ENCODE measurements at regions of chr1 and their contacts with region 1.

Region 1: DNA sequence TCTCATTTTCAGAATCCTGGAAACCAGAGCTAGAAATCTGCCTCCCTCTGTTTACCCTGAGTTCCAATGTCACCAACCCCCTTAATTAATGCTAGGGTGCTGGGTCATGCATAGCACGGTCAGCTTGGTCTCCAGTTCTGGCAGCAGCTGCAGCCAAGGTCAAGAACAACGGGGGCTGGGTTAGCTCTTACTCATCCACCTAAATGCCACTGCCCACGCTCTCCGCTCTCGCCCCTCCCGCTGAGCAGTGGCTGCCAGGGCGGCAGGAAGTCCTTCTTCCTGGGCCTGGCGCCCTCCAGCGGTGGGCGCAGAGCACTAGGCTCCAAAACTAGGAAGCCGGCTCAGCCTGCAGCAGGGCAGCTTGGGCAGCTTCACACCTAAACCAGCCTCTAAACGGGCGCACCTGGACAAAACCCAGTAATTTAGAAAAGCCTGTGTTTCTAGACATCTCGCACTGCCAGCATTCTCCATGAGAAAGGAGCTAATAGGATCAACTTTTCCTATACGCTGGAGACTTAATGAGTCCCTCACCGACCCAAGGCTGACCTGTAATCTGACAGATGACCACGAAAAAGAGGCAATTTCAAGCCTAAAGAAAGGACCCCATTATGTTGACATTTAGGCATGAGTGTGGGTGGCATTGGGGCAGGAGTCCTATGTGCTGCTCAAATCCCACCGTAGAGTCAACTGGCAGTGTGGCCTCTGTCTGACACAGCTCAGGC is 78.3 kb upstream of the LRRN2 start:
- DNase-seq: peak; percentile 85
- ATAC-seq: peak; percentile 98
- H3K4me3 Mint-ChIP-seq: peak overlapping the region; percentile 54
- H3K27ac Mint-ChIP-seq: no peak overlapping the region
- H3K4me1 Mint-ChIP-seq: peaks cover 16% of the 10 kb centered on the region
- H3K27me3 Mint-ChIP-seq: peaks cover 47% of the 10 kb centered on the region
- CTCF ChIP-seq: peak; percentile 67

Region 2: GRCh38 chr1:204516180-204516879 is 247.5 kb before region 1 on chr1 and contains the start of gene MDM4:
- CTCF ChIA-PET with region 1: no interaction called
- POLR2A ChIA-PET with region 1: no interaction called
- DNase-seq: peak; percentile 91
- ATAC-seq: peak; percentile 98
- H3K4me3 Mint-ChIP-seq: no peak within 1 kb of the TSS
- H3K27ac Mint-ChIP-seq: no peak within 1 kb of the TSS
- H3K4me1 Mint-ChIP-seq: peaks cover 12% of the 10 kb centered on the region
- H3K27me3 Mint-ChIP-seq: peaks cover under 1% of the 10 kb centered on the region; the same call in 1 of the 2 replicates
- CTCF ChIP-seq: no peak
- total RNA-seq, gene MDM4: 73.5 to 76.2 TPM (median 74.1 TPM) in 3 replicates

Region 3: GRCh38 chr1:204565617-204566582 is 198.0 kb before region 1 on chr1:
- CTCF ChIA-PET with region 1: interaction called, 57 read pairs
- POLR2A ChIA-PET with region 1: no interaction called
- DNase-seq: peak; percentile 40
- ATAC-seq: peak; percentile 85
- H3K4me3 Mint-ChIP-seq: peak overlapping the region; percentile 53
- H3K27ac Mint-ChIP-seq: peak overlapping the region; percentile 71
- H3K4me1 Mint-ChIP-seq: peaks cover 54% of the 10 kb centered on the region
- H3K27me3 Mint-ChIP-seq: peaks cover 6% of the 10 kb centered on the region
- CTCF ChIP-seq: peak; percentile 68

Region 4: GRCh38 chr1:204607910-204608309 is 156.0 kb before region 1 on chr1:
- CTCF ChIA-PET with region 1: interaction called, 11 read pairs
- POLR2A ChIA-PET with region 1: no interaction called
- DNase-seq: no peak
- ATAC-seq: no peak
- H3K4me3 Mint-ChIP-seq: no peak overlapping the region
- H3K27ac Mint-ChIP-seq: no peak overlapping the region
- H3K4me1 Mint-ChIP-seq: peaks cover 6% of the 10 kb centered on the region; the same call in 1 of the 2 replicates
- H3K27me3 Mint-ChIP-seq: peaks cover 11% of the 10 kb centered on the region
- CTCF ChIP-seq: no peak

Region 5: GRCh38 chr1:204651843-204652421 is 111.9 kb before region 1 on chr1:
- CTCF ChIA-PET with region 1: interaction called, 20 read pairs
- POLR2A ChIA-PET with region 1: no interaction called
- DNase-seq: peak; percentile 50
- ATAC-seq: peak; percentile 72
- H3K4me3 Mint-ChIP-seq: peak overlapping the region; percentile 43
- H3K27ac Mint-ChIP-seq: no peak overlapping the region
- H3K4me1 Mint-ChIP-seq: peaks cover 43% of the 10 kb centered on the region
- H3K27me3 Mint-ChIP-seq: peaks cover 18% of the 10 kb centered on the region
- CTCF ChIP-seq: no peak

Region 6: GRCh38 chr1:204692325-204692840 is 71.5 kb before region 1 on chr1:
- CTCF ChIA-PET with region 1: interaction called, 17 read pairs
- POLR2A ChIA-PET with region 1: no interaction called
- DNase-seq: no peak
- ATAC-seq: peak; percentile 66
- H3K4me3 Mint-ChIP-seq: peak overlapping the region; percentile 28
- H3K27ac Mint-ChIP-seq: no peak overlapping the region
- H3K4me1 Mint-ChIP-seq: peaks cover 28% of the 10 kb centered on the region
- H3K27me3 Mint-ChIP-seq: peaks cover 56% of the 10 kb centered on the region
- CTCF ChIP-seq: no peak

Region 7: DNA sequence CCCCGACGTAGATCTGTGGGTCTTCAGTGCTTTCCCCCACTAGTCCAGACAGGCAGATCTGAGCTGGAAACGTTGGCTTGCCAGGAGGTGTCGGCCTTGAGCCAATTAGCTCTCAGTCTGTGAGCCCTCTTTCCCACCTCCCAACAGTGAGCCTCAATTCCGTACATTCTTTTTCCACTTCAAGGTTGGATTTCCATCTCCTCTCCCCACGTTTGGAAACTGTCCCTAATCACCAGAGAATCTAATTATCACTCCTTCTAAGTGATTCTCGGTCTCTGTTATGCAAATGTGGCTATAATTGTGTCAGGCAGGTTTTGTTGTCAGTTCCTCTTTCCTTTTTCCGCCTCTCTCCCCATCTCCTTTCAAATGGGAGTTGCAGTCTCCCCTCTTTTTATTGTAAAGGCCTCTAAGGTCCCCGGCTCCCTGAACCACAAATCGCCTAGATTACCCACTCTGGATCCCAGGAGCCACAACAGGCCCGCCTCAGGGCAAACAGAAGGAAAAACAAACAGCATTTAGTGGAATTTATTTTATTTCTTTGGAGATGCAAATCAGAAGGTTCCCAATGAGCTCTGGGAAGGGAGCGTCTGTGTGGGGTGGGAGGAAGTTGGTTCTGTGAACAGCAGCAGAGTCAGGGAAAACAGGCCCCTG is 48.9 kb before region 1 on chr1:
- CTCF ChIA-PET with region 1: interaction called, 48 read pairs
- POLR2A ChIA-PET with region 1: no interaction called
- DNase-seq: peak; percentile 68
- ATAC-seq: peak; percentile 55
- H3K4me3 Mint-ChIP-seq: peak overlapping the region; percentile 50
- H3K27ac Mint-ChIP-seq: peak overlapping the region; percentile 86
- H3K4me1 Mint-ChIP-seq: peaks cover 66% of the 10 kb centered on the region
- H3K27me3 Mint-ChIP-seq: peaks cover 94% of the 10 kb centered on the region
- CTCF ChIP-seq: no peak

Region 8: GRCh38 chr1:204791453-204792353 is 27.8 kb after region 1 on chr1:
- CTCF ChIA-PET with region 1: interaction called, 20 read pairs
- POLR2A ChIA-PET with region 1: no interaction called
- DNase-seq: peak; percentile 95
- ATAC-seq: peak; percentile 96
- H3K4me3 Mint-ChIP-seq: no peak overlapping the region
- H3K27ac Mint-ChIP-seq: no peak overlapping the region
- H3K4me1 Mint-ChIP-seq: peaks cover 12% of the 10 kb centered on the region
- H3K27me3 Mint-ChIP-seq: peaks cover 11% of the 10 kb centered on the region
- CTCF ChIP-seq: peak; percentile 90